ENCODE measurements at regions of chrX and their contacts with region 1.

Region 1: DNA sequence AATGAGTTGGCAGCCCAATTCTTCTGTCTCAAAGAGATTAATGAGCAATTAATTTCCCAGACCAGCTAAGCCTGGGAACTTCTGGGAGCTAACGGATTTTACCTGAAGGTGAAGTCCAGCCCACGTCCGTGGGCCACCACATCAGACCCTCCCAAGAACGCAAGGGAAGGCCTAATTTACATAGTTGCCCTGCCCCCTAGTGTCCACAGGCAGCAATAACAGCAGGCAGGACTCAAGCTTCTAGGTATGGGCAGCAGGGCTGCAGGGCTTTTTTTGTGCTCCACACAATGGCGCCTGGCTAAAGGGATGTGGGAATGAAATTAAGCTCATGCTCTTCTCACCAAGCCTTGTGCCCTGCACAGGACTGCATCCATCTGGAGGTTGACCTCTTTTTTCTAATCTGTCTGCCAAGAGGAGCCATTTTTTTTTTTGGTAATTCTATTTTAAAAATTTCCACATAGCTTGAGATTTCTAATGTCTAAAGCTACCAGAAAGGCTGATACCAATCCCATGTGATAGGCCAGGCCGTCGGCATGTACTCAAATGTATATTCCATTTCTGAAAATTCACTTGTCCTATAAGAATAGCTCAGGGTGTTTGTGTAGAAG is 111.9 kb upstream of the TMEM164 start:
- DNase-seq: peak; percentile 34
- H3K4me3 ChIP-seq: no peak overlapping the region
- H3K27ac ChIP-seq: no peak overlapping the region
- H3K4me1 ChIP-seq: no peaks in the 10 kb centered on the region
- H3K27me3 ChIP-seq: no peaks in the 10 kb centered on the region
- CTCF ChIP-seq: peak; percentile 96 to 97

Region 2: GRCh38 chrX:109635176-109635575 is 255.8 kb before region 1 on chrX:
- CTCF ChIA-PET with region 1: no interaction called
- dilution Hi-C with region 1: no loop called
- in situ Hi-C with region 1: no loop called
- intact Hi-C with region 1: loop called (anchors 2 kb)
- DNase-seq: peak; percentile 3
- H3K4me3 ChIP-seq: no peak overlapping the region
- H3K27ac ChIP-seq: no peak overlapping the region
- H3K4me1 ChIP-seq: no peaks in the 10 kb centered on the region
- H3K27me3 ChIP-seq: no peaks in the 10 kb centered on the region
- CTCF ChIP-seq: peak; percentile 55 to 63

Region 3: DNA sequence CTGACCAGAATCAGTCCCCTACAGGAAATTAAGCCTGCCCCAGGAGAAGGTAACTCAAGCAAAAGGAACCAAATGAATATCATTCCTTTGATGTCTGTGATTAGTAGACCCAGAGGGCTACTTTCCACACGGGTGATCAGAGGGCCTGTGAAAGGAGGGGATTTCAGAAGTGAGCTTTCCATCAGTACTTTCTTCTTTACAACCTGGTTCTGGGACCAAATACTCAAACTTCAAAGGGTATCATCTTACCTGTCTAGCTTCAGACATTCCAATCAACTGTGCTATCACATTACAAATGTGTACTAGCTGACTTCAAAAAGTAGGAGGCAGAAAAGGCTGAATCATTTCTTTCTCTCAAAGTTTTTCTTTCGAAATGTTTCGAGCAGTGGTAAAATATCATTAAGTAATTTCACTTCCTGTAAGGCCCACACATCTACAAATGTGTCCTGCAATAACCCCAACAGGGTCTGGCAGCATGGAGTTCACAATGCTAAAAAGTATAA is 181.8 kb before region 1 on chrX:
- CTCF ChIA-PET with region 1: no interaction called
- dilution Hi-C with region 1: no loop called
- in situ Hi-C with region 1: no loop called
- intact Hi-C with region 1: loop called (anchors 1 kb)
- DNase-seq: peak; percentile 66
- H3K4me3 ChIP-seq: no peak overlapping the region
- H3K27ac ChIP-seq: no peak overlapping the region
- H3K4me1 ChIP-seq: peaks cover 20% of the 10 kb centered on the region
- H3K27me3 ChIP-seq: no peaks in the 10 kb centered on the region
- CTCF ChIP-seq: no peak

Region 4: GRCh38 chrX:109739625-109740432 is 151.2 kb before region 1 on chrX:
- CTCF ChIA-PET with region 1: no interaction called
- dilution Hi-C with region 1: no loop called
- in situ Hi-C with region 1: no loop called
- intact Hi-C with region 1: no loop called
- DNase-seq: peak; percentile 65
- H3K4me3 ChIP-seq: no peak overlapping the region
- H3K27ac ChIP-seq: no peak overlapping the region
- H3K4me1 ChIP-seq: peaks cover 3% of the 10 kb centered on the region
- H3K27me3 ChIP-seq: no peaks in the 10 kb centered on the region
- CTCF ChIP-seq: no peak

Region 5: GRCh38 chrX:110293658-110294057 is 402.7 kb after region 1 on chrX:
- CTCF ChIA-PET with region 1: no interaction called
- dilution Hi-C with region 1: no loop called
- in situ Hi-C with region 1: no loop called
- intact Hi-C with region 1: no loop called
- DNase-seq: no peak
- H3K4me3 ChIP-seq: no peak overlapping the region
- H3K27ac ChIP-seq: no peak overlapping the region
- H3K4me1 ChIP-seq: no peaks in the 10 kb centered on the region
- H3K27me3 ChIP-seq: no peaks in the 10 kb centered on the region
- CTCF ChIP-seq: no peak